ENCODE measurements at regions of chr1 and their contacts with region 1.

Region 1: GRCh38 chr1:229558571-229559335 is at the start of gene ABCB10:
- DNase-seq: peak; percentile 91
- ATAC-seq: peak; percentile 89
- H3K4me3 ChIP-seq: peak within 1 kb of the TSS; percentile 66
- H3K27ac ChIP-seq: peak within 1 kb of the TSS; percentile 60
- H3K4me1 ChIP-seq: no peaks in the 10 kb centered on the region; the same call in 1 of the 2 replicates
- H3K27me3 ChIP-seq: no peaks in the 10 kb centered on the region
- CTCF ChIP-seq: peak; percentile 69 to 89 (median 76); a peak in 5 of 6 replicates
- EP300 ChIP-seq: no peak
- POLR2A ChIP-seq: peak; percentile 73
- RAD21 ChIP-seq: peak; percentile 47; the same call in 1 of the 2 replicates
- polyA plus RNA-seq, gene ABCB10: 11.7 to 11.8 TPM

Region 2: GRCh38 chr1:229456016-229456415 is 102.7 kb before region 1 on chr1:
- CTCF ChIA-PET with region 1: no interaction called
- POLR2A ChIA-PET with region 1: no interaction called
- RAD21 ChIA-PET with region 1: no interaction called
- SMC1A ChIA-PET with region 1: no interaction called
- in situ Hi-C with region 1: no loop called
- intact Hi-C with region 1: no loop called
- DNase-seq: no peak
- ATAC-seq: no peak
- H3K4me3 ChIP-seq: no peak overlapping the region
- H3K27ac ChIP-seq: no peak overlapping the region
- H3K4me1 ChIP-seq: no peaks in the 10 kb centered on the region
- H3K27me3 ChIP-seq: no peaks in the 10 kb centered on the region
- CTCF ChIP-seq: no peak
- EP300 ChIP-seq: no peak
- POLR2A ChIP-seq: no peak
- RAD21 ChIP-seq: no peak

Region 3: GRCh38 chr1:229507951-229508822 is 50.6 kb before region 1 on chr1 and contains the start of gene NUP133:
- CTCF ChIA-PET with region 1: interaction called, 21 read pairs
- POLR2A ChIA-PET with region 1: interaction called, 3 read pairs
- RAD21 ChIA-PET with region 1: interaction called, 9 read pairs
- SMC1A ChIA-PET with region 1: interaction called, 5 read pairs
- in situ Hi-C with region 1: no loop called
- intact Hi-C with region 1: no loop called
- DNase-seq: peak; percentile 86
- ATAC-seq: peak; percentile 97
- H3K4me3 ChIP-seq: peak within 1 kb of the TSS; percentile 93
- H3K27ac ChIP-seq: peak within 1 kb of the TSS; percentile 83
- H3K4me1 ChIP-seq: peaks cover 9% of the 10 kb centered on the region
- H3K27me3 ChIP-seq: no peaks in the 10 kb centered on the region
- CTCF ChIP-seq: no peak
- EP300 ChIP-seq: 0 out of 4 replicates have a peak, but pooled peaks of 1 of the 2 experiments have one; percentile 16
- POLR2A ChIP-seq: peak; percentile 96
- RAD21 ChIP-seq: no peak
- polyA plus RNA-seq, gene NUP133: 10.9 to 24.3 TPM

Region 4: GRCh38 chr1:229579059-229579673 is 20.4 kb after region 1 on chr1:
- CTCF ChIA-PET with region 1: interaction called, 8 read pairs
- POLR2A ChIA-PET with region 1: interaction called, 4 read pairs
- RAD21 ChIA-PET with region 1: interaction called, 20 read pairs
- SMC1A ChIA-PET with region 1: interaction called, 5 read pairs
- in situ Hi-C with region 1: no loop called
- intact Hi-C with region 1: no loop called
- DNase-seq: peak; percentile 41
- ATAC-seq: peak; percentile 93
- H3K4me3 ChIP-seq: peak overlapping the region; percentile 35; the same call in 1 of the 2 replicates
- H3K27ac ChIP-seq: no peak overlapping the region
- H3K4me1 ChIP-seq: peaks cover 9% of the 10 kb centered on the region
- H3K27me3 ChIP-seq: no peaks in the 10 kb centered on the region; a peak in 1 of 4 replicates
- CTCF ChIP-seq: no peak
- EP300 ChIP-seq: no peak
- POLR2A ChIP-seq: no peak
- RAD21 ChIP-seq: no peak

Region 5: GRCh38 chr1:229625915-229626831 is 67.4 kb after region 1 on chr1 and contains the starts of genes TAF5L and URB2:
- CTCF ChIA-PET with region 1: interaction called, 22 read pairs
- POLR2A ChIA-PET with region 1: interaction called, 33 read pairs
- RAD21 ChIA-PET with region 1: interaction called, 25 read pairs
- SMC1A ChIA-PET with region 1: interaction called, 25 read pairs
- in situ Hi-C with region 1: loop called (anchors 5 kb)
- intact Hi-C with region 1: loop called (anchors 1 kb)
- DNase-seq: peak; percentile 38
- ATAC-seq: peak; percentile 93
- H3K4me3 ChIP-seq: peak within 1 kb of the TSS; percentile 99
- H3K27ac ChIP-seq: peak within 1 kb of the TSS; percentile 62
- H3K4me1 ChIP-seq: peaks cover 12% of the 10 kb centered on the region
- H3K27me3 ChIP-seq: no peaks in the 10 kb centered on the region
- CTCF ChIP-seq: no peak
- EP300 ChIP-seq: no peak
- POLR2A ChIP-seq: peak; percentile 89
- RAD21 ChIP-seq: no peak
- polyA plus RNA-seq, gene TAF5L: 1.1 to 1.3 TPM
- polyA plus RNA-seq, gene URB2: 2.7 to 3.6 TPM

Region 6: DNA sequence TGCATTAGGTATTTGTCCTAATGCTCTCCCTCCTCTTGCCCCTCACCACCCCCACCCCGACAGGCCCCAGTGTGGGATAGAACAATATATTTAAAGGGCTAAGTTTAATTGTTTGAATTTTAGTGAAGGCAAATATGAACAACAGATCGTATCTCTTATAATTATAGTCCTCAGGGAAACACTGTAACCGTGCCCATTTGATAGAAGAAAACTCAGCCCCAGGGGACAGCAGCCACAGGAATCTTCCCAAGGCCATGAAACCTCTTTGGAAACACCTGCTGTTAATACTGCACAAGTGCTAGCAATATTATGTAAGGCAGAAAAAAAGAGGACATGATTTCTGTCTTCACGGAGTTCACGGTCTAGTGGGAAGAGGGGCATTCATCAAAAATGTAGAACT is 209.5 kb after region 1 on chr1:
- CTCF ChIA-PET with region 1: no interaction called
- POLR2A ChIA-PET with region 1: no interaction called
- RAD21 ChIA-PET with region 1: no interaction called
- SMC1A ChIA-PET with region 1: no interaction called
- in situ Hi-C with region 1: no loop called
- intact Hi-C with region 1: no loop called
- DNase-seq: no peak
- ATAC-seq: no peak
- H3K4me3 ChIP-seq: no peak overlapping the region
- H3K27ac ChIP-seq: no peak overlapping the region
- H3K4me1 ChIP-seq: no peaks in the 10 kb centered on the region
- H3K27me3 ChIP-seq: no peaks in the 10 kb centered on the region; a peak in 1 of 4 replicates
- CTCF ChIP-seq: no peak
- EP300 ChIP-seq: no peak
- POLR2A ChIP-seq: no peak
- RAD21 ChIP-seq: no peak

Region 7: GRCh38 chr1:230073371-230074035 is 514.8 kb after region 1 on chr1:
- CTCF ChIA-PET with region 1: no interaction called
- POLR2A ChIA-PET with region 1: no interaction called
- RAD21 ChIA-PET with region 1: no interaction called
- SMC1A ChIA-PET with region 1: no interaction called
- in situ Hi-C with region 1: no loop called
- intact Hi-C with region 1: loop called (anchors 10 kb)
- DNase-seq: no peak
- ATAC-seq: peak; percentile 12; the same call in 1 of the 3 replicates
- H3K4me3 ChIP-seq: no peak overlapping the region
- H3K27ac ChIP-seq: no peak overlapping the region
- H3K4me1 ChIP-seq: no peaks in the 10 kb centered on the region; the same call in 1 of the 2 replicates
- H3K27me3 ChIP-seq: no peaks in the 10 kb centered on the region
- CTCF ChIP-seq: no peak
- EP300 ChIP-seq: no peak
- POLR2A ChIP-seq: no peak
- RAD21 ChIP-seq: no peak